Activated CD8-positive, alpha-beta T cell treated with anti-CD3 and anti-CD28 coated beads, Interleukin-2, amount 10 ng/mL, durations not matched to agents 7 days and 5 days (primary cell): ENCODE measurements at regions of chr17 and their contacts with region 1.

Region 1: DNA sequence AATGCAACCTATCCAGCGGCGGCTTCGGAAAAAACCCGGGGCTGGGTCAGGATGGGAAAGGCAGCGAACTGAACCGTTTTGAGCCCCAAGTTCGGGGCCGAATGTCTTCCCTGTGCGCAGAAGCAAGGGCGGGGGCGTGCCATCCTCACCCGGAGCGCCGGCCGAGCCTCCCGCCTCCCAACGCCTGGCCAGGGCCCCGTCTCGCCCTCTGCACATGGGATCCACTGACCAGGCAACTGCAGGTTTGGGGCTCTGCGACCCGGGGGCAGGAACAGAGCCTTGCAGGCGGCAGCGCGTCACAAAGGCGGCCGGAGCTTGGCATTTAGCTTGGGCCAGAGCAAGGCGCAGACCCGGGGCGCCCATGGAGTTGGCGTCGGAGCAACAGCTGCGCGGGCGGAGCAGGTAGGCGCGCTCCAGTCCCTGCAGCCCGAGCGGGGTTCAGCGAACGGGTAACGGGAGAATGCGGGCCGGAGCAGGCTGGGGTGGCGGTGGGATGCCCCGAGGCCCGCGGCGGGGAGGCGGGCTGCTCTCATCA is at the start of gene FBXO39:
- DNase-seq: no peak
- ATAC-seq: peak; percentile 47
- H3K4me3 Mint-ChIP-seq: no peak within 1 kb of the TSS
- H3K27ac Mint-ChIP-seq: peak within 1 kb of the TSS; percentile 8
- H3K4me1 Mint-ChIP-seq: peaks cover 17% of the 10 kb centered on the region
- H3K27me3 Mint-ChIP-seq: peaks cover 23% of the 10 kb centered on the region
- total RNA-seq, gene FBXO39: 1.5 to 1.9 TPM

Region 2: GRCh38 chr17:6660805-6661463 is 115.0 kb before region 1 on chr17:
- CTCF ChIA-PET with region 1: no interaction called
- POLR2A ChIA-PET with region 1: no interaction called
- DNase-seq: peak; percentile 47
- ATAC-seq: no peak
- H3K4me3 Mint-ChIP-seq: peak overlapping the region; percentile 0
- H3K27ac Mint-ChIP-seq: no peak overlapping the region
- H3K4me1 Mint-ChIP-seq: peaks cover 37% of the 10 kb centered on the region
- H3K27me3 Mint-ChIP-seq: peaks cover 15% of the 10 kb centered on the region

Region 3: GRCh38 chr17:6761779-6762178 is 14.2 kb before region 1 on chr17:
- CTCF ChIA-PET with region 1: interaction called, 3 read pairs
- POLR2A ChIA-PET with region 1: interaction called, 11 read pairs
- DNase-seq: no peak
- ATAC-seq: no peak
- H3K4me3 Mint-ChIP-seq: no peak overlapping the region
- H3K27ac Mint-ChIP-seq: no peak overlapping the region
- H3K4me1 Mint-ChIP-seq: peaks cover 61% of the 10 kb centered on the region
- H3K27me3 Mint-ChIP-seq: no peaks in the 10 kb centered on the region